ENCODE measurements at regions of chr16 and their contacts with region 1.

Region 1: GRCh38 chr16:83952940-83953795 is at the start of gene OSGIN1:
- DNase-seq: peak; percentile 84
- ATAC-seq: peak; percentile 87
- H3K4me3 Mint-ChIP-seq: peak within 1 kb of the TSS; percentile 63
- H3K27ac Mint-ChIP-seq: no peak within 1 kb of the TSS
- H3K4me1 Mint-ChIP-seq: peaks cover 13% of the 10 kb centered on the region
- H3K27me3 Mint-ChIP-seq: peaks cover 11% of the 10 kb centered on the region
- total RNA-seq, gene OSGIN1: 0.21 to 0.93 TPM

Region 2: DNA sequence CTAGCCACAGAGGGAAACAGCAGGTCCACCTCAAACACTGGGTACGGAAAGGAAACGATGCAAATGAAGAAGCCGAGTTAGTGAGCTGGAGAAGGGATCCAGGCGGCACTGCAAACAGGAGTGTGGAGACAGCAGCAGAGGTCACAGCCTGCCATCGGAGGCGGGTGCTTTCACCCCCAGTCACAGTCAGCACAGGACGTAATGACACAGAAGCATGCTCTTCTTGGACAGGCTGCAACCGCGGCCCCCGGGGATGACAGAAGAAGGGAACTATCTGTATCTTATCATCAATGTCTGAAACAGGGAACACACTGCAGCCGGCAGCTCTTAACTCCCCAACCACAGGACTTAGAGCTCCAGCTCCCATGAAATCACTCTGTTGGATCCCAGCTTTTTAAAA is 105.5 kb after region 1 on chr16:
- CTCF ChIA-PET with region 1: interaction called, 19 read pairs
- DNase-seq: no peak
- ATAC-seq: no peak
- H3K4me3 Mint-ChIP-seq: no peak overlapping the region
- H3K27ac Mint-ChIP-seq: no peak overlapping the region
- H3K4me1 Mint-ChIP-seq: peaks cover 3% of the 10 kb centered on the region
- H3K27me3 Mint-ChIP-seq: no peaks in the 10 kb centered on the region

Region 3: GRCh38 chr16:84065536-84066132 is 112.5 kb after region 1 on chr16:
- CTCF ChIA-PET with region 1: interaction called, 22 read pairs
- DNase-seq: peak; percentile 58
- ATAC-seq: peak; percentile 42
- H3K4me3 Mint-ChIP-seq: no peak overlapping the region
- H3K27ac Mint-ChIP-seq: no peak overlapping the region
- H3K4me1 Mint-ChIP-seq: peaks cover 7% of the 10 kb centered on the region
- H3K27me3 Mint-ChIP-seq: no peaks in the 10 kb centered on the region

Measured in activated CD8-positive, alpha-beta memory T cell treated with anti-CD3 and anti-CD28 coated beads, Interleukin-2, amount 10 ng/mL, durations not matched to agents 7 days and 5 days (primary cell).